Right ventricle myocardium superior (tissue), 1 donor: ENCODE measurements at regions of chr15 and their contacts with region 1.

Region 1: GRCh38 chr15:22980189-22981050 is at the start of gene CYFIP1:
- DNase-seq: peak; percentile 91
- ATAC-seq: peak; percentile 97
- total RNA-seq, gene CYFIP1: 28.8 TPM

Region 2: GRCh38 chr15:22838292-22839042 is 142.0 kb before region 1 on chr15 and contains the start of gene NIPA2:
- intact Hi-C with region 1: no loop called
- DNase-seq: peak; percentile 99
- ATAC-seq: peak; percentile 99
- total RNA-seq, gene NIPA2: 19.2 TPM

Region 3: GRCh38 chr15:22918056-22918455 is 62.4 kb before region 1 on chr15:
- intact Hi-C with region 1: no loop called
- DNase-seq: no peak
- ATAC-seq: no peak

Region 4: GRCh38 chr15:22949074-22949547 is 31.3 kb before region 1 on chr15:
- intact Hi-C with region 1: loop called (anchors 2 kb)
- DNase-seq: peak; percentile 89
- ATAC-seq: peak; percentile 90